Activated CD8-positive, alpha-beta T cell treated with anti-CD3 and anti-CD28 coated beads for 36 hours (primary cell): ENCODE measurements at regions of chr22 and their contacts with region 1.

Region 1: GRCh38 chr22:30289134-30289979 is at the start of gene CASTOR1:
- DNase-seq: peak; percentile 90
- ATAC-seq: peak; percentile 86
- H3K4me3 Mint-ChIP-seq: peak within 1 kb of the TSS; percentile 76
- H3K27ac Mint-ChIP-seq: peak within 1 kb of the TSS; percentile 76
- H3K4me1 Mint-ChIP-seq: peaks cover 22% of the 10 kb centered on the region
- H3K27me3 Mint-ChIP-seq: no peaks in the 10 kb centered on the region
- CTCF ChIP-seq: no peak
- total RNA-seq, gene CASTOR1: 4.2 to 5.1 TPM

Region 2: GRCh38 chr22:30178181-30179126 is 110.9 kb before region 1 on chr22:
- CTCF ChIA-PET with region 1: interaction called, 10 read pairs
- POLR2A ChIA-PET with region 1: no interaction called
- intact Hi-C with region 1: no loop called
- DNase-seq: peak; percentile 76
- ATAC-seq: peak; percentile 81
- H3K4me3 Mint-ChIP-seq: peak overlapping the region; percentile 26
- H3K27ac Mint-ChIP-seq: peak overlapping the region; percentile 94
- H3K4me1 Mint-ChIP-seq: peaks cover 62% of the 10 kb centered on the region
- H3K27me3 Mint-ChIP-seq: no peaks in the 10 kb centered on the region
- CTCF ChIP-seq: peak; percentile 45

Region 3: DNA sequence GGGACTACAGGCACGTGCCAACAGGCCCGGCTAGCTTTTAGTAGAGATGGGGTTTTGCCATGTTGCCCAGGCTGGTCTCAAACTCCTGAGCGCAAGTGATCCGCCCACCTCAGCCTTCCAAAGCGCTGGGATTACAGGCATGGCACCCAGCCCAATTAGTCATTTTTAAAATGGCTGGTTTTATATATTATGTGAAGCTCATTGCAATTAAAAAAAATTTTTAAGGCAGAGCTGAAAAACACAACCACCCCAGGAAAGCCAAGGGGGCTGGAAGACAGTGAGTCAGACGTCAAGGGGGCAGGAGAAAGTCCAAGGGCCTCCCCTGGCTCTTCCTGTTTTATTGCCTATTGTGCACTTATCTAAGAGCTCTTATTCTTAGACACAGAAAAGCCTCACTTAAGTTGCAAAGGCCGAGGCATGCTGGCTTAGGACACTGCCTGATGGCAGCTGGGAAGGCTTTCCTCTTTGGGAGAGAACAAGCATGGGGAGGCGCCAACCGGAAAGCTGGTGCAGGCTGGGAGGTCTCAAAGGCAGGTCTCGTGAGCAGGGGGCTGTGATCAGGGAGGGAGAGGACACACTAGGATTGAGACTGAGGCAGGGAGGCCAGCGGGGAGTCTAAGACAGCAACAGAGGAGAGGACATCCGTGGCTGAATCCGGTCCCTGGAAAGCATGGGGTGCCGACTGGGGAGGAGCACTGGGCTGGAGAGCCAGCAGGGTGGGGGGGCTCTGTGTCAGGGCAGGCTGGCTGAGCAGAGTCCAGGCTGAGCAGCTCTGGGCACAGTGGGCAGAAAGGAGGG is 11.6 kb before region 1 on chr22:
- CTCF ChIA-PET with region 1: interaction called, 18 read pairs
- POLR2A ChIA-PET with region 1: interaction called, 4 read pairs
- intact Hi-C with region 1: no loop called
- DNase-seq: no peak
- ATAC-seq: no peak
- H3K4me3 Mint-ChIP-seq: no peak overlapping the region
- H3K27ac Mint-ChIP-seq: no peak overlapping the region
- H3K4me1 Mint-ChIP-seq: peaks cover 46% of the 10 kb centered on the region
- H3K27me3 Mint-ChIP-seq: no peaks in the 10 kb centered on the region
- CTCF ChIP-seq: no peak

Region 4: DNA sequence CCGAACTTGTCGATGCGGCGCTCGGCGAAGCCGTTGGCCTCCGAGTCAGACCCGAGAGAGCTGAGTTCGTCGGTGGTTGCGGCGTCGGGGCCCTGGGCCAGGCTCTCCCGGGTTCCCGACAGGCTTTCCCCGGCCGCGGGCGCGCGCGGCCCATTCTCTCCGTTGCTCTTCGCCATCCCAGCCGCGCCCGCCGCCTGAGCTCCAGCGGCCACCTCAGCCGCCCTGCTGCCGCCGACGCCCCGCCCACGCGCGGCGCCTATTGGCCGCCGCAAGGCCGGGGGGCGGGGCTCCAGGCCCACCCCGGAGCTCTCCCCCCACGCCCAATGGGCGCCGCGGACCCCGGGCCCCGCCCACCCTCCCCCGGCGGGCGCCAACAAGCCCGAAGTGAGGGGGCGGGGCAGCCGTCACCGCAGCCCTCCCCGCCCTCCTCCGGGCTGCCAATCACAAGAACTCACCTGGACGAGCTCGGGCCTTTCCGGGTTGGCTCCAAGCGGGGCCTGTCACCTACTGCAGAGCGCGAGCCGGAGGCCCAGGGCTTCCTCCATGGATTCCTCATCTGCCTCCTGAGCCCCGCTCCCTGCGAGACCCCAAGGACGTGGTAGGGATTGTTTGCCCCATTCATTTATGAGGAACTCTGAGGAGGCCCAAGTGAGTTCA is 37.5 kb after region 1 on chr22 and contains the start of gene TBC1D10A:
- CTCF ChIA-PET with region 1: interaction called, 98 read pairs
- POLR2A ChIA-PET with region 1: interaction called, 13 read pairs
- intact Hi-C with region 1: no loop called
- DNase-seq: peak; percentile 96
- ATAC-seq: peak; percentile 88
- H3K4me3 Mint-ChIP-seq: peak within 1 kb of the TSS; percentile 81
- H3K27ac Mint-ChIP-seq: peak within 1 kb of the TSS; percentile 81
- H3K4me1 Mint-ChIP-seq: peaks cover 40% of the 10 kb centered on the region
- H3K27me3 Mint-ChIP-seq: no peaks in the 10 kb centered on the region
- CTCF ChIP-seq: no peak
- total RNA-seq, gene TBC1D10A: 20.5 to 21.1 TPM

Region 5: DNA sequence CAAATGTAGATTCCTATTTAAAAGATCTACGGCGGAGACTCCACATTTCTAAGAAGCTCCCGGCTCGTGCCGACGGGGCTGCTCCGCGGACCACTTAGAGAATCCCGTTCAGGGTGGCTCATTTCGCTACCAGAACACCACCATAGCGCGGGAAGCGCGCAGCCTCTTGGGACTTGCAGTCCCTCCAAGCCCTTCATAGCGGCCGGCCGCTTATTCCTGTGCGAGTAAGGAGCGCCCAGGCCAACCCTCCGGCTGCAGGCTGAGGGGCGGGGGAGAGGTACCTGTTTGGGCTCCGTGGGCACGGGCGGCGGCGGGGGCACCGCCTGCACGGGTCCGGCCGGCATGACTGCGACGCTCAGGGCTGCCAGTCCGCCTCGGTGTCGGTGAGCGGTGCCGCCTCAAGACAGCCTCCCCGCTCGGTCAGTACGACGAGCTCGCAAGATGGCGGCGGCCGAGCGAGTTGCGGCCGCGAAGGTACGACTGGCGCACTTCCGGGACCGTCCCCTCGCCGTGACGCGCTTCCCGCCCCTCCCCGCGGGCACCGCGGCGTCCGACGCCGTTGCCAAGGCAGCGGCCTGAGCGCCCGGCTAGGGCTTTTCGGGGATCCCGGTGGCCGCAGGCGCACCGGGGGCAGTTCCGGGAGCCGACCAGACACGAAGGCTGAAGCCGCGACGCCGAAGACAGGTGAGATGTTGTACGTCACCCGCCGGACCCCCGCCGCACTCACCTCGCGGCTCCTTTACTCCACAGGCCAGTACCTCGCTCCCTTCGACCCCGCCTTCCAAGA is 67.3 kb after region 1 on chr22 and contains the starts of genes CCDC157 and SF3A1:
- CTCF ChIA-PET with region 1: interaction called, 43 read pairs
- POLR2A ChIA-PET with region 1: interaction called, 12 read pairs
- intact Hi-C with region 1: no loop called
- DNase-seq: peak; percentile 96
- ATAC-seq: peak; percentile 91
- H3K4me3 Mint-ChIP-seq: peak within 1 kb of the TSS; percentile 96
- H3K27ac Mint-ChIP-seq: peak within 1 kb of the TSS; percentile 92
- H3K4me1 Mint-ChIP-seq: peaks cover 42% of the 10 kb centered on the region
- H3K27me3 Mint-ChIP-seq: no peaks in the 10 kb centered on the region
- CTCF ChIP-seq: no peak
- total RNA-seq, gene CCDC157: 2.2 to 2.4 TPM
- total RNA-seq, gene SF3A1: 252 to 262 TPM

Region 6: DNA sequence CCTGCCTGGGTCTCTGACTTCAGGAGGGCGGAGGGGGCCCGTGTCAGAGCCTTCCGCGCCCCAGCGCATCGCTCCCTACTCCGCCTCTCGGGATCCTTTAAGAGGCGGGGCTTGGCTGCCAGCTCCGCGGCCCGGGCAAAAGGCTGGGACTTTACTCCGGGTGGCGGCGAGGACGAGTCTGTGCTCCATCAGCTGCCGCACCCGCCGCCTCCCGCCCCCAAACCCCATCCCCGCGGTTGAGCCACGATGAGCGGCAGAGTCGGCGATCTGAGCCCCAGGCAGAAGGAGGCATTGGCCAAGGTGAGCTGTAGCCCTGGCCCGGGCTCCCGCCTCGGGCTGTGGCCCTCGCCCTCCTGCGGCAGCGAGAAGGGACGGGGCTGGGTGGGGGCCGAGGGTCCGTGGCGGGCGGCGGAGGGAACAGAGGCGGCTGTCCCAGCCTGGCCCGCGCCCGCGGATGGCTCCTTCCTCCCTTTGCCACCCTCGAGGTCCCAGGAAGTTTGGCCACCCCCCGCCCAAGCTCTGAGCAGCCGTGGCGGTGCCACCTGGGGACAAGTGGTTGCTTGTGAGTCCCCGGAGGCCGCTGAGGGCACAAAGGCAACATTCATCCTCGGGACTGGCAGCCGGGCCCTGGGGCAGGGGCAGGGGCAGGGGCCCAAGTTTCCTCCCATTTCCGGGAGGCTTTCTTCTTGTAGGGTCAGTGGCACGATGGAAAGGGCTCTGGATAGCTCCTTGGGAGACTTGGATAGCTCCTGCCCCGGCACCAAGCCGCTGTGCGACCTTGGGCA is 107.7 kb after region 1 on chr22 and contains the start of gene SEC14L2:
- CTCF ChIA-PET with region 1: interaction called, 472 read pairs
- POLR2A ChIA-PET with region 1: interaction called, 11 read pairs
- intact Hi-C with region 1: no loop called
- DNase-seq: peak; percentile 75
- ATAC-seq: peak; percentile 83
- H3K4me3 Mint-ChIP-seq: peak within 1 kb of the TSS; percentile 85
- H3K27ac Mint-ChIP-seq: peak within 1 kb of the TSS; percentile 74
- H3K4me1 Mint-ChIP-seq: peaks cover 45% of the 10 kb centered on the region
- H3K27me3 Mint-ChIP-seq: no peaks in the 10 kb centered on the region
- CTCF ChIP-seq: no peak
- total RNA-seq, gene SEC14L2: 15.1 to 15.4 TPM

Region 7: GRCh38 chr22:30485362-30485988 is 196.1 kb after region 1 on chr22:
- CTCF ChIA-PET with region 1: interaction called, 21 read pairs
- POLR2A ChIA-PET with region 1: no interaction called
- intact Hi-C with region 1: no loop called
- DNase-seq: peak; percentile 82
- ATAC-seq: peak; percentile 99
- H3K4me3 Mint-ChIP-seq: no peak overlapping the region
- H3K27ac Mint-ChIP-seq: no peak overlapping the region
- H3K4me1 Mint-ChIP-seq: no peaks in the 10 kb centered on the region
- H3K27me3 Mint-ChIP-seq: peaks cover 2% of the 10 kb centered on the region
- CTCF ChIP-seq: peak; percentile 97